ENCODE measurements at regions of chr5 and their contacts with region 1.

Region 1: DNA sequence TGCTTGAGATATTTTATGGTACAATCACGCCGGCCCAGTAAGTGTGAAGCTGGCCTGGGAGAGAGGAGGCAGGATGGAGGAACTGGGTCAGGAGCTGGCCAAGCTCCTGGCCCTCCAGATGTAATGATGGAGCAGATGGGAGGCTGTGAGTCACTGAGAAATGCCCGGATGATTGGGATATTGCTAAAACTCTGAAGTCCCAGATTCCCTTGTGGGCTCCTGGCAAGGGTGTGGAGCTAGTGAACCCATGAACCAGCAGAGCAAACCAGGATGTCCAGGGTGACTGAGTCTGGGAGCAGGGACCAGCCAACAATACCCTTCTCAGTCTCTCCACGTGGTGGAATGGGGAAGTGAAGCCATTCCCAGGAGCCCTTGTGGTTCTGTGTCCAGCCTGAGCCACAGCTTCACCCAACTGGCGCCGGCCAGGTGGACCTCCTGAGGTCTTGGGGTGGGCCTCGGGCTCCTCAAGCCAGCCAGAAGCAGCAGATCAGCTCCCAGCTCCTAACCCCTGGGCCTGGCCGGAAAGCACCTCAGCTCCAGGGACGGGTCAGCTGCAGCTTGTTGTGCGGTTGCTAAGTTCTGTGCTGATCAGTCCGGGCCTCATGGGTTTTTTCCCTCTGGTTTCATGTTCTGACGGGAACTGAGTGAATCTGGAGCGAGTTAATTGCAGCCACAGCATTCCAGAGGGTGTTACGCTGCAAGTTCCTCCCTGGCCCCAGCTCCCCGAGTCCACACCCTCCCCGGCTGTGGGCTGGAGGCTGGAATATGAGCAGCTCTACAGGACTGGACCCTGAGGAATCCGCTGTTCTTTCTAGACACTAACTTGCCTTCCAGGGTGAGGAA is 37.6 kb downstream of the DUSP1 start:
- DNase-seq: peak; percentile 71 to 97
- H3K4me3 ChIP-seq: peak overlapping the region in 1 of 2 donors; percentile 34
- H3K27ac ChIP-seq: peak overlapping the region; percentile 96 to 97
- H3K4me1 ChIP-seq: peaks cover 23 to 37% of the 10 kb centered on the region in 2 donors
- H3K27me3 ChIP-seq: no peaks in the 10 kb centered on the region
- CTCF ChIP-seq: no peak

Region 2: GRCh38 chr5:172721301-172722130 is 11.8 kb before region 1 on chr5:
- intact Hi-C with region 1: loop called (anchors 1 kb)
- DNase-seq: peak in 1 of 2 donors; percentile 86
- H3K4me3 ChIP-seq: peak overlapping the region; percentile 15 to 18
- H3K27ac ChIP-seq: peak overlapping the region; percentile 54 to 68
- H3K4me1 ChIP-seq: peaks cover 4 to 23% of the 10 kb centered on the region in 2 donors
- H3K27me3 ChIP-seq: no peaks in the 10 kb centered on the region
- CTCF ChIP-seq: no peak

Region 3: GRCh38 chr5:172777881-172778814 is 44.8 kb after region 1 on chr5:
- intact Hi-C with region 1: no loop called
- DNase-seq: peak in 1 of 2 donors; percentile 86
- H3K4me3 ChIP-seq: no peak overlapping the region
- H3K27ac ChIP-seq: peak overlapping the region; percentile 63 to 78
- H3K4me1 ChIP-seq: peaks cover 13 to 40% of the 10 kb centered on the region in 2 donors
- H3K27me3 ChIP-seq: no peaks in the 10 kb centered on the region
- CTCF ChIP-seq: no peak

Region 4: DNA sequence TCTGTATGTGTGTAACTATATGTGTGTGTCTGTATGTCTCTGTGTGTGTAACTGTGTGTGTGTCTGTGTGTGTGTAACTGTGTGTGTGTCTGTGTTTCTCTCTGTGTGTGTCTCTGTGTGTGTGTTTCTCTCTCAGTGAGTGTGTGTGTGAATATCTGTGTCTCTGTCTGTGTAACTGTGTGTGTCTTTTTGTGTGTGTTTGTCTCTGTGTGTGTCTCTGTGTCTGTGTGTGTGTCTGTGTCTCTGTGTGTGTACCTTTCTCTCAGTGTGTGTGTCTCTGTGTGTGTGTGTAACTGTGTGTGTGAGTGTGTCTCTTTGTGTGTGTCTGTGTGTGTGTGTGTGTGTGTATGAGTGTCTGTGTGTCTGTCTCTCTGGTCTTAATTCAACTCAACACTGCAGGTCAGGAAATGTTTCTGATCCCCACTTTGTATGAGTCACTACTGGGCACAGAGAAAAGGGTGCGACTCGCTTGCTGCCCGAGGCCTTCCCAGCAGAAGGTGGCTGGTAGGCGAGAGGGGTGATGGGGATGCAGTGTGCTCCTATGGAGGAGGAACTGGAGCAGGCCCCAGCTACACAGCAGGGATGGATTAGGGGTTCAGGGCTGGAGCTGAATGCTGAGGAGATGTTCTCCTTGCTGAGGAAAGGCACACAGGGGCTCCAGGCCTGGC is 1364.3 kb after region 1 on chr5:
- intact Hi-C with region 1: no loop called
- DNase-seq: no peak
- H3K4me3 ChIP-seq: no peak overlapping the region
- H3K27ac ChIP-seq: no peak overlapping the region
- H3K4me1 ChIP-seq: no peaks in the 10 kb centered on the region
- H3K27me3 ChIP-seq: no peaks in the 10 kb centered on the region
- CTCF ChIP-seq: no peak

Measured in ascending aorta (tissue), 2 donors.